Uterus (tissue), 4 donors: ENCODE measurements at regions of chr10 and their contacts with region 1.

Region 1: DNA sequence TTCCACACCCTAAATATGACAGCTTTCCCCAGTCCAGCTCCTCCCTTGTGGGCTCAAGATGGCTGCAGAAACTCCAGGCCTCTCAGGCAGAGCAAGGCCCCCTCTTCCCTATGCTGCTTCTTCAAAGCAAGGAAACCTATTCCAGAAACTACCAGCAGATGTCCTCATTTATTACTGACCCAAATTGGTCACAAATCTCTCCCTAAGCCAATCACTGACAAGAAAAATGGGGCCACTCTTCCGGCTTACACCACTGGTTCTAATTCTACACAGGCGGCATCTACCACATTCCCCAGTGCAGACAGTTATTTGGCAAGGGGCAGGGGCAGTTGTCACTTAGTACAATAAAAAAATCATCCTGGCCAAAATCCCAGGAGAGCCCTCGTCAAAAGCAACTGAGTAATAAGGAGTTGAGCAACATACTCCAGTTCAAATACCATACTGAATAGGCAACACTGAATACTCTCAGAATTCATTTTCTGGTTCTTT is 150.4 kb downstream of the SFMBT2 start:
- DNase-seq: peak; percentile 78 to 92
- H3K4me3 ChIP-seq: no peak overlapping the region
- H3K27ac ChIP-seq: peak overlapping the region; percentile 47 to 84
- H3K4me1 ChIP-seq: peaks cover 0 to 5% of the 10 kb centered on the region in 2 donors
- H3K27me3 ChIP-seq: no peaks in the 10 kb centered on the region
- CTCF ChIP-seq: peak; percentile 75 to 87 (median 82)
- POLR2A ChIP-seq: no peak

Region 2: GRCh38 chr10:6894405-6894804 is 366.1 kb before region 1 on chr10:
- intact Hi-C with region 1: no loop called
- DNase-seq: no peak
- H3K4me3 ChIP-seq: no peak overlapping the region
- H3K27ac ChIP-seq: no peak overlapping the region
- H3K4me1 ChIP-seq: no peaks in the 10 kb centered on the region
- H3K27me3 ChIP-seq: no peaks in the 10 kb centered on the region
- CTCF ChIP-seq: no peak
- POLR2A ChIP-seq: no peak

Region 3: DNA sequence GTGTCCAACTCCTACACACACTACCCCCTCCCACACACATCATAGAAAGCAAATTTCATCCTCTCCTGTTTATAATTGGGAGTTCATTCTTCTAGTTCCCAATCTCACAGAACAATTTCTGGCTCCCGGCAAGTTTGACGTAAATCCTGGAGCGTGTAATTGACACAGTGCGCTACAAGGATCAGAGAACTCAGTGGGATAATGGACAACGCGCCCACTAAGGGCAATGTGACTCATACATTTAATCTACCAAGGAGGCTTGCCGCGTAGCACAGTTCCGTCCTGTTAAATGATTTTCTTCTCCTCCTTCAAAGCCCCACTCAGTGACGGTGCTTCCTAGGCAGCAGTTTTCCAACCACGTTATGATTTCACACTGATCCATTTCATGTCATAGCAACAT is 127.2 kb before region 1 on chr10:
- intact Hi-C with region 1: no loop called
- DNase-seq: no peak
- H3K4me3 ChIP-seq: no peak overlapping the region
- H3K27ac ChIP-seq: no peak overlapping the region
- H3K4me1 ChIP-seq: no peaks in the 10 kb centered on the region
- H3K27me3 ChIP-seq: peaks cover 0 to 7% of the 10 kb centered on the region in 2 donors
- CTCF ChIP-seq: no peak
- POLR2A ChIP-seq: no peak

Region 4: DNA sequence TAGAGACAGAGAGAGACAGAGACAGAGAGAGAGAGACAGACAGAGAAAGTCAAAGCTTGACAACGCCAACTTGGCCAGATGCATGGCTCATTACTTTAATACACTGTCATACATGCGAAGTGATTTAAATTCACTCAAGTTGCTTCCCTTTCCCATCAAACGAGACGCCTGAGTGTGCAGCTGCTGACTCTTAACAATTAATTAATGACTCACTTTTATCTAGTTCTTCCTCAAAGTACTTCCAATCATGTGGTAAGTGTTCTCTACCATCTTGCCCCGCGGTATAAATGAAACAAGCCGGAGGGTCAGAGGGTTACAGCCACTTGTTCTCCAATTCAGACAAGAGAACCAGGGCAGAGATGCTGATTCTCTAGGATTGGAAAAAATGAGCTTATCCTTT is 59.6 kb after region 1 on chr10:
- intact Hi-C with region 1: no loop called
- DNase-seq: no peak
- H3K4me3 ChIP-seq: no peak overlapping the region
- H3K27ac ChIP-seq: no peak overlapping the region
- H3K4me1 ChIP-seq: no peaks in the 10 kb centered on the region
- H3K27me3 ChIP-seq: no peaks in the 10 kb centered on the region
- CTCF ChIP-seq: no peak
- POLR2A ChIP-seq: no peak

Region 5: DNA sequence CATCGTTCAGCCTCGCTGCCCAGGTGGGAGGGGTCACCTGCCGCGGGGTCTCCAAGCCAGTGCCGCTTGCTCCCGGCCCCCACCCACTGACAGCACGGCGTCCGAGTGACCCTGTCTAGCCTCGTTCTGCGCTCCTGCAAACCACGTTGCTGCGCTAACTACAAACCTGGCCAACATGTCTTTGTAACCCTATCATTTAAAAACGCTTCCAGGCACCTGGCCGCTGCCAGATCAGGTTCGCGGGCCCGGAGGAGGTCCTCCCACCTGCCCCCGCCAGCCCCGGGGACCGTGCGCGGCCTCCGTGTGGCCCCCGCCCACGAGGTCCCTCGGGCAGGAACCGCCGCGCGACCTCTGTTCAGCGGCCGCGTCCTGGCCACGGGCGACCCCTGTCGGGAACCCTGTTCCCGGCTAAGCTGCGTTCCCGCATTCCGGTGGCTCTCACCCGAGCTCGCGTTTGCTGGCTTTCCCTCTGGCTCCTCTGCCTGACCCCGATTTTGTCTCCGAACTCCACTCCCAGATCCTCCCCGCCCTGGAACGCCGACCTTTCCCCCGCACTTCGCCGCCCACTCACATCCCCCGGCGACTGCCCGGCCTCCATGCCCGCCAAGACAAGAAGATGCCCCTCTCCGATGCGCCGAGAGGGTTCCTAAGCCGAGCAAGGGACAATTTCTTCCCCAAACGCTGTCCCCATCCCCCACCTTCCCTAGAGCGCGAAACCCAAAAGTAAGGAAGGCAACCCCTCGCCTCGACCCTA is 148.0 kb after region 1 on chr10:
- intact Hi-C with region 1: loop called (anchors 1 kb)
- DNase-seq: peak; percentile 61 to 72
- H3K4me3 ChIP-seq: peak overlapping the region; percentile 72 to 80
- H3K27ac ChIP-seq: peak overlapping the region; percentile 62 to 82
- H3K4me1 ChIP-seq: peaks cover 0 to 14% of the 10 kb centered on the region in 2 donors
- H3K27me3 ChIP-seq: peaks cover 3 to 9% of the 10 kb centered on the region in 2 donors
- CTCF ChIP-seq: peak; percentile 64 to 76 (median 68)
- POLR2A ChIP-seq: no peak